GM10248 (cell line): ENCODE measurements at regions of chr3 and their contacts with region 1.

Region 1: GRCh38 chr3:11601446-11602238 is 42.1 kb downstream of the VGLL4 start:
- DNase-seq: peak; percentile 86
- CTCF ChIP-seq: no peak

Region 2: DNA sequence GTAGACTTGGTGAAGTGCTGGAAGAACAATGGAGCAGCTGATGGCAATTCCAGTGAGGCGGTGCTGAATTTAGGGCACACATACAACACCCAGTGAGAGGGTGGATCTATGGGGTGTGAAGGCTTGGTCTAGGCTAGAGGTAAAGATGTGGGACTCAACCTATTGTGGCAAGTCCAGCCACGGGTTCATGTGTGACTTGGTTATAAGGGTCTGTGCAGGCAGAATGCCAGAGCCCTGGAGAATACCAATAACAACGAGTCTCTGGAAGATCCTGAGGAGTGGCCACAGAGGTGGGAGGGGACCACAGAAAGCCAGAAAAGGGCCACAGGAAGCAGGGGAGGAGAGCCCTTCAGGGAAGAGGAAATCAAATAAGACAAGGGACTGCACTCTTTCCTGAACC is 12.9 kb before region 1 on chr3:
- CTCF ChIA-PET with region 1: interaction called, 13 read pairs
- POLR2A ChIA-PET with region 1: no interaction called
- DNase-seq: no peak
- CTCF ChIP-seq: no peak

Region 3: DNA sequence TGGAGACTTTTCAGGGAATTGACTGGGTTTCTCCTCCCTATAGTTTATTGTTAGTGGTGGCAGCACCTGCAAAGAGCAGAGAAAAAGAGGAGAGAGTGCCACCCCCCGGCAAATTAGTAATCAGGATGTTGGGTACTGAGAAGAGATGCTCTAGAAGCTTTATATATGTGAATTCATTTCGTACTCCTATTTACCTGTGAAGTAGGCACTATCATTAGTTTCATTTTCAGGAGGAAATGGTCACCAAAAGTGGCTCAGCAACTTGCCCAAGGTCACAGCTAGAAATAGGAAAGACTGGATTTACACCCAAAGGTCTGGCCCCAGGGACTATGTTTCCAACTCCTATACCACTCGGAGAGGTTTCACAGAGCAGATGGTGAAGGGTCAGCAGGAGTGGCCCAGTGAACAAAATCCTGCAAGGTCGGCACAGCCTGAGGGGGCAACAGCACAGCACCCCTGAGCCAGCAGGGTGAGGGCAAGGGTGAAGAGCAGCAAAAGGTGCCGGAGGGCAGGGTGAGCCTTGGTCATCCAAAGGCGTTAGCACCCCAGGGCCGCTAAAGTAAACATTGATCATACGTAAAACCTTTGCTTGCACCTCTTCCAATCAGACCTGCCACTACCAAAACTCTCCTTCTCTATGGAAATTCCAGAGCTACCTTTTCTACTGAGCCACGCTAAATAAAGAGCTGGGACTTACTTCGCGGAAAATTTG is 18.5 kb after region 1 on chr3:
- CTCF ChIA-PET with region 1: interaction called, 56 read pairs
- POLR2A ChIA-PET with region 1: interaction called, 3 read pairs
- DNase-seq: no peak
- CTCF ChIP-seq: no peak